Sciatic nerve (tissue), 2 donors: ENCODE measurements at regions of chr15 and their contacts with region 1.

Region 1: DNA sequence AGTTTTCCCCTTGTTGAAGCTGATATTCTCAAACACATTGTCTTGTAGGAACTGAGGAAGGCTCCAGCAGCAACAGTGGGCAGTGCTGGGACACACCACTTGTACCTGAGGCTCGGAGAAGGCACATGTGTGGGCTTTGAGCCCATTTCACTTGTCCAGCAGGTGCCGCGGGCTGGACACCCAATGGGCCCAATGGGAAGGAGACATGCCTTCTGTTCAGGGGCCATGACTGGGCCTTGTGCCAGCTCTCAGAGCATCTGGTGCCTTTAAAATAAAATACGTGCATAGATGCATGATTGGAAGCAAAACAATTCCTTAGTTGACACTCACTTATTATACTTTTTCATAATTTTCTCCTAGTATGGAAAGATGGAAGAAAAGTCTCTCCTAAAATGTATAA is 334.2 kb downstream of the KLF13 start:
- DNase-seq: no peak
- ATAC-seq: no peak

Region 2: GRCh38 chr15:31605371-31605931 is 55.4 kb before region 1 on chr15:
- intact Hi-C with region 1: loop called (anchors 10 kb)
- DNase-seq: no peak
- ATAC-seq: no peak